Activated T-helper 2 cell treated with anti-CD3 and anti-CD28 coated beads, Interferon-gamma antibody, Interleukin-2, Interleukin-4, amounts not matched to agents 10 μg/mL and 5 μg/mL and 100 μg/mL, durations not matched to agents 14 hours and 24 hours and 36 hours (primary cell): ENCODE measurements at regions of chr4 and their contacts with region 1.

Region 1: GRCh38 chr4:8468746-8469535 is 28.4 kb downstream of the TRMT44 start:
- DNase-seq: peak; percentile 29
- H3K4me3 Mint-ChIP-seq: no peak overlapping the region
- H3K27ac Mint-ChIP-seq: no peak overlapping the region
- H3K4me1 Mint-ChIP-seq: no peaks in the 10 kb centered on the region
- H3K27me3 Mint-ChIP-seq: no peaks in the 10 kb centered on the region

Region 2: DNA sequence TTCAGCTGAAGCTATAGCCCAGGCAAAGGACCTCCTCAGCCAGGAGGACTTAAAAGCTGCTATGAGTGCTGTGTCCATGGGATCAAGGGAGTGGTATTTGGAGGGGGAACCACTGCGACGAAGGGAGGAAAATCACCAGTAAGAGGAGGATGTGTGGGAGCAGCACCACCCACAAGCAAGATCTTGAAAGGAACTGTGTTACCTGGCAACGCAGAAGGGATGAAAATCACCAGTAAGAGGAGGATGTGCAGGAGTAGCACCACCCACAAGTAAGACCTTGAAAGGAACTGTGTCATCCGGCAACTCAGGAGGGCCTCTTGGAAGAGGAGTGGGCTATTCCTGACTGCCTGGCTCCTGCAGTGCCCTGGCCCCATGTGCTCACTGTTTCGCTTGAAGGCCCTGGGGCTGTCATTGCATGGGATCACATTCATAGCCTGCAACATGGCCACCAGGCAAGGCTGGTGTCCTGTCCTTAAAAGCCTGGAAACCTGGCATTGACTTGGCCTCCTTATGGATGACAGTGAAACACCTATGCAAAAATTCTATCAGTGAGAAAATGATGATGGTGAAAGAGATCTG is 19.9 kb after region 1 on chr4:
- intact Hi-C with region 1: no loop called
- DNase-seq: no peak
- H3K4me3 Mint-ChIP-seq: no peak overlapping the region
- H3K27ac Mint-ChIP-seq: no peak overlapping the region
- H3K4me1 Mint-ChIP-seq: no peaks in the 10 kb centered on the region
- H3K27me3 Mint-ChIP-seq: no peaks in the 10 kb centered on the region

Region 3: GRCh38 chr4:8547108-8547970 is 78.4 kb after region 1 on chr4:
- intact Hi-C with region 1: loop called (anchors 5 kb)
- DNase-seq: no peak
- H3K4me3 Mint-ChIP-seq: no peak overlapping the region
- H3K27ac Mint-ChIP-seq: no peak overlapping the region
- H3K4me1 Mint-ChIP-seq: no peaks in the 10 kb centered on the region
- H3K27me3 Mint-ChIP-seq: no peaks in the 10 kb centered on the region